Activated T-helper 2 cell treated with anti-CD3 and anti-CD28 coated beads, Interferon-gamma antibody, Interleukin-2, Interleukin-4, amounts not matched to agents 10 μg/mL and 5 μg/mL and 100 μg/mL, durations not matched to agents 14 hours and 24 hours and 36 hours (primary cell): ENCODE measurements at regions of chr19 and their contacts with region 1.

Region 1: GRCh38 chr19:21020298-21021227 is at the start of gene ZNF430:
- DNase-seq: peak; percentile 94
- H3K4me3 Mint-ChIP-seq: peak within 1 kb of the TSS; percentile 96
- H3K27ac Mint-ChIP-seq: peak within 1 kb of the TSS; percentile 99
- H3K4me1 Mint-ChIP-seq: peaks cover 24% of the 10 kb centered on the region
- H3K27me3 Mint-ChIP-seq: no peaks in the 10 kb centered on the region
- total RNA-seq, gene ZNF430: 19.6 and 22.5 TPM in 2 replicates

Region 2: GRCh38 chr19:20912973-20913372 is 107.6 kb before region 1 on chr19:
- intact Hi-C with region 1: no loop called
- DNase-seq: no peak
- H3K4me3 Mint-ChIP-seq: no peak overlapping the region
- H3K27ac Mint-ChIP-seq: no peak overlapping the region
- H3K4me1 Mint-ChIP-seq: no peaks in the 10 kb centered on the region
- H3K27me3 Mint-ChIP-seq: no peaks in the 10 kb centered on the region

Region 3: GRCh38 chr19:20923077-20923871 is 97.3 kb before region 1 on chr19 and contains the start of gene ZNF85:
- intact Hi-C with region 1: loop called (anchors 10 kb)
- DNase-seq: peak; percentile 87
- H3K4me3 Mint-ChIP-seq: peak within 1 kb of the TSS; percentile 95
- H3K27ac Mint-ChIP-seq: peak within 1 kb of the TSS; percentile 96
- H3K4me1 Mint-ChIP-seq: peaks cover 6% of the 10 kb centered on the region
- H3K27me3 Mint-ChIP-seq: no peaks in the 10 kb centered on the region
- total RNA-seq, gene ZNF85: 8.2 and 10.1 TPM in 2 replicates

Region 4: DNA sequence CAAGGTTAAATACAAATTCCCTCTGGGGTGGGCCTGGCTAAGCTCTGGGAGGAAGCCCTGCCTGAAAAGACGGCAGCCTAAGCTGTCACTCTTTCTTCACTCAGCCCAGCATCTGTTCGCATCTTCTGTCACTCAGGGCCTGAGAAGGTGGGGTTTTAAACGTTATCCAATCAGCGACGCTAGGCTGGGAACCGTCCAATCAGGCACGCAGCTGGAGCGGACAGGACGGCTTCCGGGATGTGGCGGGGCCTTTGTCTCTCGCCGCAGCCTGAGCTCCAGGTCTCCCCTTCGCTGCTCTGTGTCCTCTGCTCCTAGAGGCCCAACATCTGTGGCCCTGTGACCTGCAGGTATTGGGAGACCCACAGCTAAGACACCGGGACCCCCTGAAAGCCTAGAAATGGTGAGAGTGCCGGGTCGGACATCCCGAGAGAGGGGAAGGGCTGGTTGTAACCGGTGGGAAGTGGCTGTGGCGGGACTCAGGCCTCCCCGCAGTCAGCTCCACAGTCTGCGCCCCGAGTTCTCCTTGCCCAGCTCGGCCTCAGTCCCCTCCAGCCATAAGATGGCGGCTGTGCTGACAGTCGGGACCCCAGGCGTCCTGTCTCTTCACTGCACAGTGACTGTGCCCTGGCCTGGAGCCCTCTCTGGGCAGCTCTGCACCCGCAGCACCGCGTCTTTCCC is 121.4 kb after region 1 on chr19 and contains the start of gene ZNF431:
- intact Hi-C with region 1: loop called (anchors 2 kb)
- DNase-seq: peak; percentile 88
- H3K4me3 Mint-ChIP-seq: peak within 1 kb of the TSS; percentile 98
- H3K27ac Mint-ChIP-seq: peak within 1 kb of the TSS; percentile 94
- H3K4me1 Mint-ChIP-seq: peaks cover 13% of the 10 kb centered on the region
- H3K27me3 Mint-ChIP-seq: no peaks in the 10 kb centered on the region
- total RNA-seq, gene ZNF431: 15.6 and 16.0 TPM in 2 replicates

Region 5: DNA sequence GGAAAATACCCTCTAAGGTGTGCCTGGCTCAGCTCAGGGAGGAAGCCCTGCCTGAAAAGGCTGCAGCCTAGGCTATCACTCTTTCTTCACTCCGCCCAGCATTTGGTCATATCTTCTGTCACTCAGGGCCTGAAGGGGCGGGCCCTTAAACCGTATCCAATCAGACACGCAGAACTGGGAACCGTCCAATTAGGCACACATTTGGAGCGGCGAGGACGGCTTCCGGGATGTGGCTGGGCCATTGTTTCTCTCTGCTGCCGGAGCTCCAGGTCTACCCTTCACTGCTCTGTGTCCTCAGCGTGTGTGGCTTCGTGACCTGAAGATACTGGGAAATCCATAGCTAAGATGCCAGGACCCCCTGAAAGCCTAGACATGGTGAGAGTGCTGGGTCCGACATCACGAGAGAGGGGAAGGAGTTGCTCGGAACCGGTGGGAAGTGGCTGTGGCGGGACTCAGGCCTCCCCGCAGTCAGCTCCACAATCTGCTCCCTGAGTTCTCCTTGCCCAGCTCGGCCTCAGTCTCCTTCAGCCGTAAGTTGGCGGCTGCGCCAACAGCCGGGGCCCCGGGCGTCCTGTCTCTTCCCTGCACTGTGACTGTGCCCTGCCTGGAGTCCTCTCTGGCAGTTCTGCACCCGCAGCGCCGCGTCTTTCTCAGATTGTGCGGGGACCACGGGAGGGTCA is 376.5 kb after region 1 on chr19 and contains the start of gene ZNF493:
- intact Hi-C with region 1: loop called (anchors 5 kb)
- DNase-seq: peak; percentile 88
- H3K4me3 Mint-ChIP-seq: peak within 1 kb of the TSS; percentile 98
- H3K27ac Mint-ChIP-seq: peak within 1 kb of the TSS; percentile 85
- H3K4me1 Mint-ChIP-seq: peaks cover 14% of the 10 kb centered on the region
- H3K27me3 Mint-ChIP-seq: no peaks in the 10 kb centered on the region
- total RNA-seq, gene ZNF493: 10.5 and 11.1 TPM in 2 replicates